HepG2 (cell line): ENCODE measurements at regions of chr18 and their contacts with region 1.

Region 1: GRCh38 chr18:21914739-21915319 is 174.2 kb downstream of the MIB1 start:
- DNase-seq: peak; percentile 53
- ATAC-seq: peak; percentile 74
- H3K4me3 ChIP-seq: no peak overlapping the region
- H3K27ac ChIP-seq: no peak overlapping the region
- H3K4me1 ChIP-seq: no peaks in the 10 kb centered on the region
- H3K27me3 ChIP-seq: no peaks in the 10 kb centered on the region; a peak in 1 of 5 replicates
- CTCF ChIP-seq: peak; percentile 75
- EP300 ChIP-seq: no peak
- POLR2A ChIP-seq: no peak
- RAD21 ChIP-seq: peak; percentile 70; the same call in 1 of the 2 replicates

Region 2: DNA sequence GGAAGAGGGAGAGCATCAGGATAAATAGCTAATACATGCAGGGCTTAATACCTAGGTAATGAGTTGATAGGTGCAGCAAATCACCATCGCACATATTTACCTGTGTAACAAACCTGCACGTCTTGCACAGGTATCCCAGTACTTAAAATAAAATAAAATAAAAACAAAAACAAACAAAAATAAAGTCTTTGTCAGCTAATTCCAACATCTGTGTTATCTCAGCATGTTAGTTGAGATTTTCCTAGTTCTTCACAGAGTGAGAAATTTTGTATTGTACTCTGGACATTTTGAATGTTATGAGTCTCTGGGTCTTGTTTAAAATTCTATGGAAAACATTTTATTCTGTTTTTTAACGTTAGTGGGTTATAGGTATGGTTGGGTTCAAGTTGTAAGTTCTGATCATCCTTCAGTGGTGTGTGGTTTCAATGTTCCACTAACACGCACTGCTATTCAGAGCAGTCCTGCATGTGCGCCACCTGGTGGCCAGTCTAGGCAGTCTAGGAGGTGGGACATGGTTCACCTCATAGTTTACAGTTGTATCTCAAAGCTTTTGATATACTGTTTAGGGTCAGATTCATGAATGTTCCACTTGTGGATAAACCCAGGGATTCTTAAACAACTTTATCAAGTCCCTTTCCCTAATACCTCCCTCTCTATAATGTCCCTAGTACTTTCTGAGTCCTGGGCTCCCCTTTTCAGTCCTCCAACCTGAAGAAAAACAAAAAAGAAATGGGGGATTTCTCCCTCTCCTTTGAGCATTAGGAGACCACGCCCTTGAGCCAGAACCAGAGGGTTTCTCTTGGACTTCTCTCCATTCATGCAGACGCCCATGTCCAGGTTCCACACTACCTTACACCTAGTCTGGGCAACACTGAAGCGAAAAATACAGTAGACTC is 41.2 kb after region 1 on chr18:
- CTCF ChIA-PET with region 1: interaction called, 5 read pairs
- POLR2A ChIA-PET with region 1: no interaction called
- in situ Hi-C with region 1: no loop called
- intact Hi-C with region 1: loop called (anchors 5 kb)
- DNase-seq: peak; percentile 54
- ATAC-seq: peak; percentile 98
- H3K4me3 ChIP-seq: no peak overlapping the region
- H3K27ac ChIP-seq: no peak overlapping the region
- H3K4me1 ChIP-seq: peaks cover 15% of the 10 kb centered on the region
- H3K27me3 ChIP-seq: no peaks in the 10 kb centered on the region
- CTCF ChIP-seq: peak; percentile 86
- EP300 ChIP-seq: no peak
- POLR2A ChIP-seq: no peak
- RAD21 ChIP-seq: peak; percentile 46; the same call in 1 of the 2 replicates

Region 3: DNA sequence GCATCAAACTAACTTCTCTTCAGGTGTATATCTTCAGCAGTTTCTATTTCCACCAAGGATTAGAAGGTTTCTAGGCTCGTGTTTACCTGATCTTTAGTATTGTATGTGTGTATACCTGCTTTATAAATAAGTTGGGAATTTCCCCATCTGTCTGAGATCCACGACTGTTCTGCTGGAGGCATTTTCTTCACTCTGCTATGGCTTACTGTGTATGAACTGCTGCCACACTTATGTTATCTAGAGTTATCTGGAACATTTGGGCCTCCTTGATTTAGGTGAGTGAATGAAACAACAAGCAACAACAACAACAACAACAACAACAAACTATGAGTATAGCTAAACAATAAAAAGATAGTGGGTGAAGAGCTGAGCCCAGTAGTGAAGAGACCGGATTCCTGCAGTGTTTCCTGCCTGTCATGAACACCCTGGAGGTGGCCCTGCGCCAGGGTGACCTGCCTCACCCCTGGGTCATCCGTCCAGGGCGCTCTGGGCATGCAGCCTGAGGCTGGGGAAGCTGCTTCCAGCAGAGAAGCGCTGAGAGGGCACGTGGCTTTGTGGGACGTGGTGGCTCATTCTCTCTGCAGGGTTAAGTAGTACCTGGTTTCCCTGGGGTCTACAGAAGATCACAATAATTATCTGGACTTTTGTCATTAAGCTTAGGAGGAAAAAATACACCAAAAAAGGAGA is 198.5 kb after region 1 on chr18:
- CTCF ChIA-PET with region 1: no interaction called
- POLR2A ChIA-PET with region 1: no interaction called
- in situ Hi-C with region 1: no loop called
- intact Hi-C with region 1: loop called (anchors 10 kb)
- DNase-seq: peak; percentile 21
- ATAC-seq: peak; percentile 88
- H3K4me3 ChIP-seq: no peak overlapping the region
- H3K27ac ChIP-seq: no peak overlapping the region
- H3K4me1 ChIP-seq: peaks cover 42% of the 10 kb centered on the region
- H3K27me3 ChIP-seq: peaks cover 0 to 5% of the 10 kb centered on the region in 2 experiments; a peak in 1 of 5 replicates
- CTCF ChIP-seq: no peak
- EP300 ChIP-seq: no peak
- POLR2A ChIP-seq: no peak
- RAD21 ChIP-seq: no peak